Heart right ventricle (tissue), 16 donors: ENCODE measurements at regions of chr18 and their contacts with region 1.

Region 1: GRCh38 chr18:2104620-2105462 is 466.5 kb downstream of the METTL4 start:
- DNase-seq: peak; percentile 25 to 41
- ATAC-seq: peak in 4 of 8 donors; percentile 58 to 76 (median 66)
- H3K4me3 ChIP-seq: no peak overlapping the region
- H3K27ac ChIP-seq: no peak overlapping the region
- H3K4me1 ChIP-seq: no peaks in the 10 kb centered on the region
- H3K27me3 ChIP-seq: peaks cover 0 to under 1% (median 0%) of the 10 kb centered on the region in 7 donors
- CTCF ChIP-seq: peak; percentile 27 to 83 (median 68)

Region 2: DNA sequence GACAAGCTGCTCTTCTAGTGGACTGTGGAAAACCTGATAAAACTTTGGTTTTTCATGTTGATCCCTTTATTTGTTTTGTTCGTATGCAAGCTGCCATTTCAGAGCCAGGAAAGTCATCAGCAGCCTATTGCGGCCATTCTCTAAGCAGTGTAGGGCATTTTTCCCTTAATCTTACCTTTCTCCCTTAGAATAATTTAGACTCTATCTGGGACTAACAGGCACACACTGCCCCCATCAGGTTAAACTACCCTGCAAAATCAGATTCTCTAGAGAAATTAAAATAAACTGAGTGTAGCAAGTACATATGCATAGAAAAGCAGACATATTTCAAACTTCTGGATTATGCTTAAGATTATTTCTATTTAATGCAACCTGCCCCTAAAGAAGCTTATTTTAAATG is 119.0 kb after region 1 on chr18:
- intact Hi-C with region 1: loop called in 8 of 10 experiments (anchors 5 to 10 kb)
- DNase-seq: peak in 1 of 2 donors; percentile 26
- ATAC-seq: peak in 1 of 8 donors; percentile 51
- H3K4me3 ChIP-seq: peak overlapping the region in 6 of 10 donors; percentile 6 to 40 (median 29)
- H3K27ac ChIP-seq: no peak overlapping the region
- H3K4me1 ChIP-seq: no peaks in the 10 kb centered on the region
- H3K27me3 ChIP-seq: peaks cover 0 to 7% (median 0%) of the 10 kb centered on the region in 7 donors
- CTCF ChIP-seq: peak; percentile 23 to 70 (median 58)

Region 3: DNA sequence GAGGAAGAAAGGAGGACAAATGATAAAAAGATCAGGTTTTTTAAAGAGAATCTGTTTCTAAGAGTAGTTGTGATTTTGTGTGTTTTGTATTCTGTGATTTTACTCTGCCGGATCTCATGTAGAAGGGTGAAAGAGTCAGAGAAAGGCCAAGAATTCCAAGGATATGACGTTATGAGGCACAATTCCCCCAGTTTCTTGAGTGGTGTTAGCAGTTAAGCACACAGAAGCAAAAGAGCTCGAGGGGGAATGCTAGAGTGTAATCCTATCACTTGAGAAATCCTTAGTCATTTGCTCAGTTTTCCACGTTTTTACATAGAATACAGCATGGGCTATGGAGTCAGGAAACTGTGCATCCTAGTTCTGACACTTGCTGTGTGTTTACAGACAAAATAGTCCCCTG is 431.7 kb after region 1 on chr18:
- intact Hi-C with region 1: loop called in 5 of 10 experiments (anchors 5 to 10 kb)
- DNase-seq: no peak
- ATAC-seq: peak in 5 of 8 donors; percentile 30 to 85 (median 56)
- H3K4me3 ChIP-seq: no peak overlapping the region
- H3K27ac ChIP-seq: peak overlapping the region in 2 of 10 donors; percentile 7 to 22
- H3K4me1 ChIP-seq: no peaks in the 10 kb centered on the region
- H3K27me3 ChIP-seq: no peaks in the 10 kb centered on the region
- CTCF ChIP-seq: no peak

Region 4: DNA sequence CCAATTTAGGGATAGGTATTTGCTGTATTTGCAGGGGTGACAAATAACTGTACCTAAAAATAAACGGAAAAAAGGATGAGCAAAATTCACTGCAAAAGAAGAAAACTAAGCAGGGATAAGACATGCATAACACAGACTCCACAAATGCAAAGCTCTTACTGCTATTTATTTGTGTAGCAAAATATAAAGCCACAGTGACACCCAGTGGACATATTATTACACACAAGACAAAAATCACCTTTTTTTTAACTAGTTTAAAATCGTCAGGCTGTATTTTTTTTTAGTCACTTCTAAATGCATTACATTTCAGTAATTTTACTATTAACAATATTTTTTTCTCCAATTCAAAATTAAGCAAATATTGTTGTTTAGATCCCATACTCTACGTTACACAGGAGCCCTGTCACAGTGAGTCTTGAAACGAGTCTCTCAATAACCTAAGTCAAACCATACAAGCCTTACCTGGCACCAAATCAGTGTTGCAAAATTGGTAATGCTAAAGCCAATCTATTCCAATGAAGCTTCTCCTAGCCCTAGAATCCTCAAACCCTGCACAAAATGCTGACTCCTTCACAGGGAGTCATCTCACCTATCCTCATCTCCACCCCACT is 442.7 kb after region 1 on chr18:
- intact Hi-C with region 1: loop called in 5 of 10 experiments (anchors 2 to 10 kb)
- DNase-seq: no peak
- ATAC-seq: peak in 2 of 8 donors; percentile 42 to 55
- H3K4me3 ChIP-seq: no peak overlapping the region
- H3K27ac ChIP-seq: no peak overlapping the region
- H3K4me1 ChIP-seq: no peaks in the 10 kb centered on the region
- H3K27me3 ChIP-seq: no peaks in the 10 kb centered on the region
- CTCF ChIP-seq: peak; percentile 36 to 72 (median 61)